ENCODE measurements at regions of chr12 and their contacts with region 1.

Region 1: DNA sequence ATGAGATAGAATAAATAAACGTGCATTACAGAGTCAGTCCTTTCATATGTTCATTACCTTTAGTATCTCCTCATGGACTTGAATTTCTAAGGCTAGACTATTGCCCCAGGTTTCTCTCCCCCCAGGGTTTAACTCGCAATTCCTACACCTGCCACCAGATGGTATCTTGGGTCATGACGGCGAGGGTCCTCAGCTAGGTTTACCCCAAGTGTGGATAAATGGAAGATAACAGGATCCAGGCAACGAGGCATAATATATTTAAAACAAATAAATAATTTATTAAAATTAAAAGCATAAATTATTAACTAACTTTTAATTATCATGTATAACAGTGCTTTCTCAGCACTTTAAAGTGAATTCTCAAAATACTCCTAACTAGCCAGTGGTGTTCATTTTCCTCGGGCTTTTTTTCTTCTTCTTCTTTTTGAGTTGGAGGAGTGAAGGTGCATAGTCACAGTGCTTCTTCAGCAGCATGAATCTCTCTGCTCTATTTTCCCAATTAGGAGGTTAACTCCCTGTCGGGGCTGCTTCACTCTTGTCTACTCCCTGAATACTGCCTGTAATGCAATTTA is 243.5 kb upstream of the CAND1 start:
- DNase-seq: no peak
- ATAC-seq: no peak
- H3K4me3 ChIP-seq: no peak overlapping the region
- H3K27ac ChIP-seq: no peak overlapping the region
- H3K4me1 ChIP-seq: no peaks in the 10 kb centered on the region
- H3K27me3 ChIP-seq: peaks cover 0 to 14% (median 0%) of the 10 kb centered on the region in 9 donors
- CTCF ChIP-seq: peak; percentile 39 to 65 (median 55)
- POLR2A ChIP-seq: no peak

Region 2: GRCh38 chr12:66915306-66915904 is 110.2 kb before region 1 on chr12:
- intact Hi-C with region 1: no loop called
- DNase-seq: no peak
- ATAC-seq: peak in 2 of 4 donors; percentile 30 to 36
- H3K4me3 ChIP-seq: no peak overlapping the region
- H3K27ac ChIP-seq: no peak overlapping the region
- H3K4me1 ChIP-seq: no peaks in the 10 kb centered on the region
- H3K27me3 ChIP-seq: no peaks in the 10 kb centered on the region
- CTCF ChIP-seq: no peak
- POLR2A ChIP-seq: no peak

Region 3: DNA sequence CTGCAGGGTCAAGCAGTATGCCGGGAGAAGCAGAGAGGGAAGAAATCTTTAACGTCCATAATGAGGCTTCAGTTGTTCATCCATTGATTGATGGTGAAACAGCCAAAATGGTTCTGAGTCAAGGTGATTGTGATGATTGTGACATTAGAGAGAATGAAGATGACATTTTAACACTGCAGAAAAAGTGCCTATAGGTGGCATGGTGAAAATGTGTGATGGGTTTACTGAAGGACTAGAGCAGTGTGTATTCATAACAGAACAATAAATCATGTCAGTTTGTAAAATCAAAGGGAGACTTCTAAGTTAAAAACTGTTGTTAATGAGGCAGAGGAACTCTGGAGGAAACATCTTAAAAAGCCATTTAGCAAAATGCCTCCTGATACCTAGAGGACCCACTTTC is 185.9 kb after region 1 on chr12:
- intact Hi-C with region 1: loop called in 2 of 10 experiments (anchors 5 to 10 kb)
- DNase-seq: no peak
- ATAC-seq: no peak
- H3K4me3 ChIP-seq: no peak overlapping the region
- H3K27ac ChIP-seq: no peak overlapping the region
- H3K4me1 ChIP-seq: peaks cover 0 to 3% (median 0%) of the 10 kb centered on the region in 12 donors
- H3K27me3 ChIP-seq: peaks cover 0 to 7% (median 0%) of the 10 kb centered on the region in 9 donors
- CTCF ChIP-seq: no peak
- POLR2A ChIP-seq: no peak

Measured in heart left ventricle (tissue), 16 donors.